ENCODE measurements at regions of chr1 and their contacts with region 1.

Region 1: GRCh38 chr1:31938174-31938950 is at the start of gene PTP4A2:
- DNase-seq: peak; percentile 97
- H3K4me3 ChIP-seq: peak within 1 kb of the TSS; percentile 74 to 90 (median 80)
- H3K27ac ChIP-seq: peak within 1 kb of the TSS; percentile 95 to 97 (median 96)
- H3K4me1 ChIP-seq: peaks cover 0 to 60% (median 50%) of the 10 kb centered on the region in 4 donors
- H3K27me3 ChIP-seq: no peaks in the 10 kb centered on the region
- CTCF ChIP-seq: peak in 1 of 4 experiments; percentile 48
- EP300 ChIP-seq: no peak
- POLR2A ChIP-seq: no peak
- total RNA-seq, gene PTP4A2: 226 to 327 (median 255) TPM

Region 2: GRCh38 chr1:31644560-31645273 is 293.6 kb before region 1 on chr1 and contains the start of gene PEF1:
- intact Hi-C with region 1: loop called (anchors 10 kb)
- DNase-seq: peak; percentile 100
- H3K4me3 ChIP-seq: peak within 1 kb of the TSS; percentile 63 to 95 (median 74)
- H3K27ac ChIP-seq: peak within 1 kb of the TSS; percentile 87 to 98 (median 94)
- H3K4me1 ChIP-seq: peaks cover 0 to 53% (median 30%) of the 10 kb centered on the region in 4 donors
- H3K27me3 ChIP-seq: no peaks in the 10 kb centered on the region
- CTCF ChIP-seq: no peak
- EP300 ChIP-seq: peak in 1 of 4 donors; percentile 49
- POLR2A ChIP-seq: peak; percentile 51 to 76
- total RNA-seq, gene PEF1: 52.9 to 87.4 (median 65.7) TPM

Region 3: GRCh38 chr1:31705080-31705866 is 233.1 kb before region 1 on chr1:
- intact Hi-C with region 1: no loop called
- DNase-seq: peak; percentile 90
- H3K4me3 ChIP-seq: peak overlapping the region in 3 of 4 donors; percentile 45 to 59 (median 56)
- H3K27ac ChIP-seq: peak overlapping the region; percentile 82 to 92 (median 90)
- H3K4me1 ChIP-seq: peaks cover 0 to 55% (median 53%) of the 10 kb centered on the region in 4 donors
- H3K27me3 ChIP-seq: no peaks in the 10 kb centered on the region
- CTCF ChIP-seq: peak; percentile 9 to 54 (median 33)
- EP300 ChIP-seq: no peak
- POLR2A ChIP-seq: no peak

Region 4: GRCh38 chr1:32013386-32014198 is 75.2 kb after region 1 on chr1 and contains the start of gene KHDRBS1:
- intact Hi-C with region 1: loop called (anchors 5 kb)
- DNase-seq: peak; percentile 100
- H3K4me3 ChIP-seq: peak within 1 kb of the TSS; percentile 74 to 100 (median 88)
- H3K27ac ChIP-seq: peak within 1 kb of the TSS; percentile 96 to 100 (median 99)
- H3K4me1 ChIP-seq: peaks cover 0 to 41% (median 35%) of the 10 kb centered on the region in 4 donors
- H3K27me3 ChIP-seq: no peaks in the 10 kb centered on the region
- CTCF ChIP-seq: no peak
- EP300 ChIP-seq: peak in 1 of 4 donors; percentile 82
- POLR2A ChIP-seq: peak; percentile 84 to 91
- total RNA-seq, gene KHDRBS1: 67.2 to 80.6 (median 73.6) TPM

Measured in sigmoid colon (tissue), 7 donors.